AG04450 (cell line): ENCODE measurements at regions of chr11 and their contacts with region 1.

Region 1: GRCh38 chr11:6682936-6683861 is at the start of gene MRPL17:
- DNase-seq: peak; percentile 98
- H3K4me3 ChIP-seq: peak within 1 kb of the TSS; percentile 100
- H3K27ac ChIP-seq: peak within 1 kb of the TSS; percentile 90
- H3K27me3 ChIP-seq: no peaks in the 10 kb centered on the region
- CTCF ChIP-seq: peak; percentile 85
- polyA plus RNA-seq, gene MRPL17: 63.3 and 69.1 TPM in 2 replicates

Region 2: DNA sequence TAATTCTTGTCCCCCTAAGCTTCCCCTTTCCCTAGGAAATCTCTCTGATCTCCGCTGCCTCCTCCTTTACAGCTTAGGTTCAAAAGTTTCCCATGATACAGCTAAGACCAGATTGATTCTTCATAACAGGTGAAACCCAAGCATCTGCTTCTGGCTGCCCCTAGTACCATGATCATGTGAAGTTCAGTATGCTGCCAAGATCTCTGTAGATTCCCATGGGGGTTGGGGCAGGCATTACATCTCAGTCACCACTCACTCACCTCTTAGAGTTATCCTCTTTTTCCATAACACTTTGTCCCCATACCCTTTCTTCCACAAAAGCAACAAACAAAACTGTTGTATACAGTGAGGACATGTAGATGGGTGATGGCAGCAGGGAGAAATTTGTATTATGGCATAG is 123.8 kb before region 1 on chr11:
- CTCF ChIA-PET with region 1: no interaction called
- POLR2A ChIA-PET with region 1: no interaction called
- DNase-seq: no peak
- H3K4me3 ChIP-seq: no peak overlapping the region
- H3K27ac ChIP-seq: no peak overlapping the region
- H3K27me3 ChIP-seq: no peaks in the 10 kb centered on the region
- CTCF ChIP-seq: no peak

Region 3: DNA sequence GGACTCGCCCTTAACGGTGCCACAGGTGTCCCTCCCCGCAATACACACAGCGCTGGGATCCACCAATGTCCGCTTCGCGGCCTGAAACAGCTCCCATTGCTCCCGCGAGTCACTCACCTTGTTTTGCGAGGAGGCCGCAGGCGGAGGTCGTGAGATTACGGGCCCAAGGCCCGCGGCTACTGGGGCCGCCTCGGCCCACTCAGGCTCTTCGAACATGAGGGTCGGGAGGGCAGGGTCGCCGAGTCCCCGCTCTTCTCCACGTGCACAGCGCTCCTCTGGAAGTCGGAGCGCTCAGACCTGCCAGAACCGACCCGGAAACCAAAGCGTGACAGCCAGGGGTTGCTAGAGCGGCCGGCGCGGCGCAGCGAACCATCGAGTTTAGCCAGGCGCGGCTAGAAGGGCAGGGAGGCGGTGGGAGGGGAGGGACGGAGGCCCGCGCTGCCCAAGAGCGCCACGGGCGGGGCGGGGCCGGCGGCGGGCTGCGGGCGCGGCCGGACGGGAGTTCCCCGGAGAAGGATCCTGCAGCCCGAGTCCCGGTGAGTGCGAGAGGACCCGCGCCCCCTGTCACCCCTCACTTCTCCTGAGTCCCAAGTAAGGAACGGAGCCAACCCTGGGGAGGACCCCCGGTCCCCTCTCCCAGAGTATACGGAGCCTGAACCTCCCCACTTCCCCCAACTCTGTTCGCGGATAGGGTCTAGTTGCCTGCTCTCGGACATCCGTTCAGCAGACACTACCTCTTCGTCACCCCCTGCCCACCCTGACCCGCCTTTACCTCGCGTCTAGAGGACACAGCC is 79.7 kb before region 1 on chr11 and contains the starts of genes ILK and RRP8:
- CTCF ChIA-PET with region 1: interaction called, 17 read pairs
- POLR2A ChIA-PET with region 1: interaction called, 12 read pairs
- DNase-seq: peak; percentile 66
- H3K4me3 ChIP-seq: peak within 1 kb of the TSS; percentile 99
- H3K27ac ChIP-seq: peak within 1 kb of the TSS; percentile 89
- H3K27me3 ChIP-seq: no peaks in the 10 kb centered on the region
- CTCF ChIP-seq: peak; percentile 22; the same call in 1 of the 2 replicates
- polyA plus RNA-seq, gene ILK: 362 and 417 TPM in 2 replicates
- polyA plus RNA-seq, gene RRP8: 13.7 and 16.3 TPM in 2 replicates

Region 4: DNA sequence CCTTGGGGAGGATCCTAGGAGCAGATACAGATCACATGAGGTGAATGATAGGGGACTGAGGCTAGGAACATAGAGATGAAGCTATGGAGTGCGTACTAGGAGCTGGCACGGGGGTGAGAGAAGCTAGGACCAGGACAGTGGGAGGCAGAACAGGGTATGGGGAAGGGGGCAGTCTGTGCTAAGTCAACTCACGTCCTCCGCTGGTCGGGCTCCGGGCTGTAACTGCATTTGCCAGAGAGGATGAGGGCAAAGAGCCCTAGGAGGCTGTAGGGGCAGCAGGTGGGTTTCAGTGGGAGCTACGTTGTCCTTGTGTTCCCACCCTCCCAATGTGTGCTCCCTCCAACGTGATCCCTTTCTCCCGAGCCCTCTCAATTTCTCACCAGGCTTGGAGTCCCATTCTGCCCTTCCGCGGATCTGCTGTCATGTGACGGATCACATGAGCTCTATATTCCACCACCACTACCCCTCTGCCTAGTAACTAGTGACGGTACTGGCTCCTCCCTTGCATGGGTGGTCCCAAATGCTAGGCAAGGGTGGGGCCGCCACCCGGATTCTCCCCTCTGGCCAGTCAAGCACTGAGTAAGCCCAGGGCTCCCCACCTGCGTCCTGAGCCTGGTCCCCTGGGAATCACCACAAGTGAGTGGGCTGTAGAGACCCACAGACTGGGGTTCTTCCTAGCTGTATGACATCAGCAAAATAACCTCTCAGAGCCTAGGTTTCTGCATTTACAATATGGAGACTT is 64.0 kb before region 1 on chr11 and contains the start of gene TPP1:
- CTCF ChIA-PET with region 1: interaction called, 44 read pairs
- POLR2A ChIA-PET with region 1: interaction called, 10 read pairs
- DNase-seq: peak; percentile 86
- H3K4me3 ChIP-seq: peak within 1 kb of the TSS; percentile 93
- H3K27ac ChIP-seq: peak within 1 kb of the TSS; percentile 73
- H3K27me3 ChIP-seq: peaks cover 2% of the 10 kb centered on the region
- CTCF ChIP-seq: no peak
- polyA plus RNA-seq, gene TPP1: 128 and 152 TPM in 2 replicates

Region 5: DNA sequence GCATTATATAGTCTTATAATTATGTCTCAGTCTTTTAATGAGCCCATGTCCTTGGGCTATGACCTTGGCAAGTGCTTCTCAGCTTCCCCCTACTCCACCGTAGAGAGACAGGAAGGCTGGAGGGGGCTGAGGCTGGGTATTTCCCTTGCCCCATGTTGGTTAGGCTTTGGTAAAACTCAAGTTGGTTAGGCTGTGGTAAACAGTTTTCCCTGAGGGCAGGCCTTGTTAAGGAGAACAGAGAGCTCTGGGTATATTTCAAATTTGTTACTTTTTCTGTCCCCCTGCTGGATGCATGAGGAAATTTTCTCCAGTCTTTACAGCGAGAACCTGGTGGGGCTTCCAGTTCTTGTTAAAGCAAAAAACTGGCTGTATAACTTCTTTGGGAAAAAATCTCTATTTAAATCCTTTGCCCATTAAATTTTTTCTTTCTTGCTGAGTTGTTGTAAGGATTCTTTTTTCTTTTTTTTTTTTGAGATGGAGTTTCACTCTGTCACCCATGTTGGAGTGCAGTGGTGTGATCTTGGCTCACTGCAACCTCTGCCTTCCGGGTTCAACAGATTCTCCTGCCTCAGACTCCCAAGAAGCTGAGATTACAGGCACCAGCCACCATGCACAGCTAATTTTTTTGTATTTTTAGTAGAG is 15.3 kb before region 1 on chr11:
- CTCF ChIA-PET with region 1: interaction called, 35 read pairs
- POLR2A ChIA-PET with region 1: no interaction called
- DNase-seq: no peak
- H3K4me3 ChIP-seq: no peak overlapping the region
- H3K27ac ChIP-seq: no peak overlapping the region
- H3K27me3 ChIP-seq: no peaks in the 10 kb centered on the region
- CTCF ChIP-seq: peak; percentile 53

Region 6: GRCh38 chr11:6705905-6706535 is 22.8 kb after region 1 on chr11:
- CTCF ChIA-PET with region 1: interaction called, 13 read pairs
- POLR2A ChIA-PET with region 1: no interaction called
- DNase-seq: no peak
- H3K4me3 ChIP-seq: no peak overlapping the region
- H3K27ac ChIP-seq: no peak overlapping the region
- H3K27me3 ChIP-seq: no peaks in the 10 kb centered on the region
- CTCF ChIP-seq: peak; percentile 98